ENCODE measurements at regions of chr2 and their contacts with region 1.

Region 1: GRCh38 chr2:10043906-10044601 is 704 bp downstream of the KLF11 start:
- DNase-seq: peak; percentile 96
- ATAC-seq: peak; percentile 77
- H3K4me3 ChIP-seq: peak overlapping the region; percentile 58 to 69 (median 65)
- H3K27ac ChIP-seq: peak overlapping the region; percentile 94 to 95 (median 94)
- H3K4me1 ChIP-seq: peaks cover 35 to 62% of the 10 kb centered on the region in 2 donors
- H3K27me3 ChIP-seq: no peaks in the 10 kb centered on the region
- CTCF ChIP-seq: no peak
- POLR2A ChIP-seq: peak; percentile 8 to 59

Region 2: DNA sequence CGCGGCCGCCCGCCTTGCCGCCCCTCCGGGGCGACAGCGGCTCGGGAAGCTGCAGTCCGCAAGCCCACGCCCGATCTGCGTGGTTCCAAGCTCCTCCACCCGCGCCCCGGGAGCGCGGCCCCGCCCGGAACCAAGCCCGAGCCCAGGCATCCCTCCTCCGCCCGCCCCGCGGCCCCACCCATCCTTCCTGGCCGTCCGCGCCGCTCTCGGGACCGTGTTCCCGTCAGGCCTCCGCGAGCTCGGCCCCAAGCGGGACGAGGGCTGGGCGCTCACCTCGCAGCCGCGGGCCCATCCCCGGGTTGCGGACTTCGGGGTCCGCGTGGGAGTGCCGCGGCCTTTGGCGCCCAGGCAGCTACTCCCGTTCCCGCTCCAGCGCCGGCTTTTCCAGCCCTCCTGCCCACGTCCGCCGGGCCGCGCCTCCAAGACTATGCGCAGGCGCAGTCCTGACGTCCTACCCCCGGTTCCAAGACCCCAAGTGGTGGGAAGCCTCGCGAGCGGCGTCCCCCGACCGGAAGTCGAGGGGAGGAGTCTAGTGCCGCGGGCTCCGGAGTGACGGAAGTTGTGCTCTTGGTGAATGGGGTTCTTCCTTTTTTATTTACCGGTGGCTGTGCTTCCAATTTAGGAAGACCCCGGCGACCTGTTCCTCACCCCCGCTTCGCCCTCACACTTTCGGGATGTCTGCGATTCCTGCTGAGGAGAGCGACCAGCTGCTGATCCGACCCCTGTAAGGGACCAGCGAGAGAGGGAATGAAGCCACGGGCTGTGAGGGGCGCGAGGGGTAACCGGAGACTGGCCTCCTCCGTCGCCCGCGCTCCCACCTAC is 620.7 kb before region 1 on chr2 and contains the starts of genes CPSF3 and ITGB1BP1:
- in situ Hi-C with region 1: no loop called
- intact Hi-C with region 1: loop called (anchors 10 kb)
- DNase-seq: peak; percentile 94 to 96
- ATAC-seq: peak; percentile 93 to 96
- H3K4me3 ChIP-seq: peak within 1 kb of the TSS; percentile 84 to 99 (median 98)
- H3K27ac ChIP-seq: peak within 1 kb of the TSS; percentile 82 to 96 (median 91)
- H3K4me1 ChIP-seq: peaks cover 27 to 29% of the 10 kb centered on the region in 2 donors
- H3K27me3 ChIP-seq: no peaks in the 10 kb centered on the region
- CTCF ChIP-seq: peak in 3 of 5 experiments; percentile 11 to 35 (median 27)
- POLR2A ChIP-seq: peak; percentile 55 to 60
- total RNA-seq, gene CPSF3: 20.9 to 51.8 (median 24.1) TPM
- total RNA-seq, gene ITGB1BP1: 21.4 to 28.0 (median 26.4) TPM

Region 3: DNA sequence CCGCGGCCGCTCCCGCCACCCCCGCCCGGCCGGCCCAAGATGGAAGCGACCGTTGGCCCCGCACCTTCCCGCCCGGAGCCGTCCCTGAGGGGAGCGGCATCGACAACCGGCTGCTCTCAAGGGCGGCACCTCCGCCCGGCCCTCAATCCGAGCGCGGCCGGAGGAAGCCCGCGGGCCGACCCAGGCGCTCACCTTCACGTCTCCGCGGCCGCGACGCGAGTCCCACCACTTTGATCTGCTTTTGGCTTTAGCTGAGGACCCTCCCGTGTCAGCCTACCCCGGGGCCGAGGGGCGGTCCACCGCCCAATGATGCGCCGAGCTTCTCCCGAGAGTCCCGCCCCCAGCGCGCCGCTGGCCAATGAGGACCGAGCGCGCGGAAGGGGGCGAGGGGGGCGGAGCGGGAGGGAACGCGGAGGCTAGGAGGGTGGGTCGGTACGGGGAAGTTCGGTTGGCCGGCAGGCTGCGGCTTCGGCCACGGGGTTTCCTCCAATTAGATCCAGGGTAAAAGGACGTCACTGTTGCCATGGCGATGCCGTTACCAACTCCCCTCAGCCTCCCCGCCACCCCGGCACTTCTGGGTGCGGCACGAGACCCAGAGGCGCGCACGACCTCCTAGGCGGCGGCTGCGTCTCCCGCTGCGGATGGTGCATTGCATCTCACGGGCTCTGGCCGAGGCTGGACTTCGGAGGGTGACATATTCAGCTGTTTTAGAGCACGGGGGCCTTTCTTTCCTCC is 413.1 kb before region 1 on chr2 and contains the start of gene YWHAQ:
- in situ Hi-C with region 1: loop called in 1 of 4 experiments (anchors 25 kb)
- intact Hi-C with region 1: no loop called
- DNase-seq: peak; percentile 98
- ATAC-seq: peak; percentile 86 to 88
- H3K4me3 ChIP-seq: peak within 1 kb of the TSS; percentile 78 to 97 (median 94)
- H3K27ac ChIP-seq: peak within 1 kb of the TSS; percentile 91 to 98 (median 96)
- H3K4me1 ChIP-seq: peaks cover 41 to 43% of the 10 kb centered on the region in 2 donors
- H3K27me3 ChIP-seq: no peaks in the 10 kb centered on the region
- CTCF ChIP-seq: no peak
- POLR2A ChIP-seq: peak; percentile 96 to 99
- total RNA-seq, gene YWHAQ: 40.3 to 63.7 (median 48.4) TPM

Region 4: GRCh38 chr2:9813312-9814133 is 230.5 kb before region 1 on chr2:
- in situ Hi-C with region 1: loop called in 3 of 4 experiments (anchors 10 to 25 kb)
- intact Hi-C with region 1: loop called (anchors 5 kb)
- DNase-seq: peak; percentile 35 to 56
- ATAC-seq: peak; percentile 79 to 82
- H3K4me3 ChIP-seq: peak overlapping the region in 3 of 4 donors; percentile 12 to 46 (median 22)
- H3K27ac ChIP-seq: no peak overlapping the region
- H3K4me1 ChIP-seq: peaks cover 3 to 7% of the 10 kb centered on the region in 2 donors
- H3K27me3 ChIP-seq: no peaks in the 10 kb centered on the region
- CTCF ChIP-seq: peak; percentile 82 to 93 (median 90)
- POLR2A ChIP-seq: no peak

Region 5: DNA sequence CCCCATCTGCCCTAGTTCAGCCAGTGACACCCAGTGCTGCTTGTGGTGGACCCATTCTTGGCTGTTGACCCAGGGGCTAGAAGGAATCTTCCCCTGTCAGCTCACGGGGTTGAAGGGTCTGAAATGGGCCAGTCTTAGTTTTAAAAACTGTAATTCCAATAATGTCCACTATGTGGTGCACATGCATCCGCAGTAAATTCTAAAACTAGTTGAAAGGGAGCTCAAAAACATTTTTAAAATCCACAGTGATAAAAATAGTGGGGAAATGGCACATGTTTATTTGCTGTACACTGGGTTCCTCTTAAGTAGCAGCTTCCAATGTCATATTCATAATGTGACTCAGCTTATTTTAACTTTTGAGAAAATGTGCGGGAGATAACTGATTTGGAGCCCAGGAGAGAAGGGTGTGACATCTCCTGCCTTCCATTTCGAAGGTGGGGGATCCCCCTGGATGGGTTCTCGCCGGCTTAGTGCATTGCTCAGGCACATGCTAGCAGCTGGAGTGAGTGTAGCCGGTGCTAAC is 59.8 kb before region 1 on chr2:
- in situ Hi-C with region 1: loop called (anchors 5 kb)
- intact Hi-C with region 1: loop called (anchors 1 kb)
- DNase-seq: no peak
- ATAC-seq: peak; percentile 55 to 71
- H3K4me3 ChIP-seq: peak overlapping the region in 1 of 4 donors; percentile 15
- H3K27ac ChIP-seq: peak overlapping the region in 3 of 4 donors; percentile 35 to 45 (median 41)
- H3K4me1 ChIP-seq: peaks cover 12 to 22% of the 10 kb centered on the region in 2 donors
- H3K27me3 ChIP-seq: no peaks in the 10 kb centered on the region
- CTCF ChIP-seq: peak; percentile 74 to 85 (median 82)
- POLR2A ChIP-seq: no peak

Region 6: GRCh38 chr2:10028988-10029874 is 14.8 kb before region 1 on chr2:
- in situ Hi-C with region 1: no loop called
- intact Hi-C with region 1: no loop called
- DNase-seq: peak in 1 of 2 donors; percentile 39
- ATAC-seq: peak; percentile 36 to 40
- H3K4me3 ChIP-seq: peak overlapping the region in 1 of 4 donors; percentile 6
- H3K27ac ChIP-seq: peak overlapping the region; percentile 44 to 65 (median 55)
- H3K4me1 ChIP-seq: peaks cover 0 to 13% of the 10 kb centered on the region in 2 donors
- H3K27me3 ChIP-seq: no peaks in the 10 kb centered on the region
- CTCF ChIP-seq: no peak
- POLR2A ChIP-seq: peak; percentile 10 to 26

Region 7: DNA sequence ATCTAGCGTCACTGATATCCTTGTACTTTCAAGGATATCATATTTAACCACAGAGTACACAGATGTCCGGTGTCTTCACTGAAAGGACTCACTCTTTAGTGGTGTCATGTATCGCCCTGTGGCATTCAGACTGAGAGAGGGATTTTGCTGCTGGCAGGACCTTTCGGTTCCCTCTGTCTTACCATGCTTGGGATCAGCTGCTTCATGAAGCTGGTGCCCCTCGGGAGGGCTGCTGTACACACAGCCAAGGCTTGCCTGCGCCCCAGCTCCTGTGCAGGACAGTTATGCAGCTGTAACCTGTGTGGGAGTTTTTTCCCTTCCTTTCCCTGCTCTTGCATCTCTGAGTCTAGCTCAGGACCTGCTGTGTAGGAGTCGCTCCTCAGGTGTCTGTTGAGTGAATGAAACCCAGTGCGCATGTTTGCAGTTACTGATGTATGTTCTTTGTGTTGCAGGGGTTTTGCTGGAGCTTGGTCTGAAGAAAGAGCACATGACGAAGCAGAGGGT is 1554.2 kb after region 1 on chr2:
- in situ Hi-C with region 1: no loop called
- intact Hi-C with region 1: loop called (anchors 10 kb)
- DNase-seq: peak; percentile 82 to 89
- ATAC-seq: peak; percentile 95 to 96
- H3K4me3 ChIP-seq: no peak overlapping the region
- H3K27ac ChIP-seq: peak overlapping the region; percentile 86 to 94 (median 90)
- H3K4me1 ChIP-seq: peaks cover 15 to 18% of the 10 kb centered on the region in 2 donors
- H3K27me3 ChIP-seq: no peaks in the 10 kb centered on the region
- CTCF ChIP-seq: no peak
- POLR2A ChIP-seq: peak in 1 of 2 donors; percentile 31

Measured in gastrocnemius medialis (tissue), 4 donors.